ENCODE measurements at regions of chr12 and their contacts with region 1.

Region 1: DNA sequence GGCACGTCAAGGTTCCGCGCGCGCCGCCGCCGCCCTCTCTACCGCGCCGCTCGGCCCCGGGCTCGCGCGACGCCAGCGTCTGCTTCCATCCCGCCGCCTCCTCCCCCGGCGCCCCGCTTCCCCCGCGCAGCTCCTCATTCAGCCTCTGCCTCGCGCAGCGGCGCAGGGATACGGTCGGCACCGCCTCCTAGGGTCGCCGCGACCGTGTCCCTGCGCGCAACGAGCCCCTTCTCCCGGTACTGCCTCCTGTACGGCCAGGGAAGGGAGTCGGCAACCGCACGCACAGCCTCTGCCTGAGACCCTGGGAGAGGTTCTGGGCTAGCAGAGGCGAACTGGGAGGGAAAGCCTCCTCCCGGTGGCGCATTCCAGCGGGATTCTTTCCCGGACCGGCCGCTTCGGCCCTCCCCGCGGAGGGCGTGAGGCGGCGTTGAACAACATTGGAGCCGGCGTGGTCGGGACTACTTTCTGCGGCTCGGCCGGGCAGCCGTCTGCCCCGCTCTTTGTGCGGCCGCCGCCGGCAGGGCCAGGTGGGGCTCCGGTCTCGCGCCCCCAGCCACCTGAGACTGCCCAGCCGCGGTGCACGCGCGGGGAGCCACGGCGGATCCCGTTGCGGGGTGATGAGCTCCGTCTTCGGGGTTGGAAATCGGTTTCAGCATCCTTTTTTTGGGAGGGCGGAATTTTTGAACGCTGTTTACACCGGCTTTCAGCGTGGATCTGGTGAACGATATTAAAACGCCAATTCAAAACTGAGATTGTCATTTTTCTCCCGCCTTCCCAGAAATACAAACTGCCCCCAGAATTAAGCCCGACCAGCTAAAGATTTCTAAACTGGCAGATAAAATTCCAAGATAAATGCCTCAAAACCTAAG is at the start of gene LRP6:
- DNase-seq: peak; percentile 92
- H3K4me3 Mint-ChIP-seq: peak within 1 kb of the TSS; percentile 94
- H3K27ac Mint-ChIP-seq: peak within 1 kb of the TSS; percentile 99
- H3K4me1 Mint-ChIP-seq: peaks cover 18% of the 10 kb centered on the region
- H3K27me3 Mint-ChIP-seq: no peaks in the 10 kb centered on the region
- CTCF ChIP-seq: no peak
- total RNA-seq, gene LRP6: 24.9 and 27.6 TPM in 2 replicates

Region 2: GRCh38 chr12:11741434-11742092 is 525.5 kb before region 1 on chr12:
- CTCF ChIA-PET with region 1: no interaction called
- POLR2A ChIA-PET with region 1: no interaction called
- intact Hi-C with region 1: no loop called
- DNase-seq: peak; percentile 21
- H3K4me3 Mint-ChIP-seq: no peak overlapping the region
- H3K27ac Mint-ChIP-seq: peak overlapping the region; percentile 9
- H3K4me1 Mint-ChIP-seq: peaks cover 24% of the 10 kb centered on the region
- H3K27me3 Mint-ChIP-seq: no peaks in the 10 kb centered on the region
- CTCF ChIP-seq: no peak

Region 3: GRCh38 chr12:12171991-12172521 is 95.1 kb before region 1 on chr12:
- CTCF ChIA-PET with region 1: no interaction called
- POLR2A ChIA-PET with region 1: interaction called, 19 read pairs
- intact Hi-C with region 1: no loop called
- DNase-seq: peak; percentile 57
- H3K4me3 Mint-ChIP-seq: no peak overlapping the region
- H3K27ac Mint-ChIP-seq: no peak overlapping the region
- H3K4me1 Mint-ChIP-seq: peaks cover 10% of the 10 kb centered on the region
- H3K27me3 Mint-ChIP-seq: no peaks in the 10 kb centered on the region
- CTCF ChIP-seq: no peak

Region 4: GRCh38 chr12:12201274-12201758 is 65.8 kb before region 1 on chr12:
- CTCF ChIA-PET with region 1: no interaction called
- POLR2A ChIA-PET with region 1: no interaction called
- intact Hi-C with region 1: no loop called
- DNase-seq: no peak
- H3K4me3 Mint-ChIP-seq: no peak overlapping the region
- H3K27ac Mint-ChIP-seq: no peak overlapping the region
- H3K4me1 Mint-ChIP-seq: no peaks in the 10 kb centered on the region
- H3K27me3 Mint-ChIP-seq: no peaks in the 10 kb centered on the region
- CTCF ChIP-seq: no peak

Region 5: DNA sequence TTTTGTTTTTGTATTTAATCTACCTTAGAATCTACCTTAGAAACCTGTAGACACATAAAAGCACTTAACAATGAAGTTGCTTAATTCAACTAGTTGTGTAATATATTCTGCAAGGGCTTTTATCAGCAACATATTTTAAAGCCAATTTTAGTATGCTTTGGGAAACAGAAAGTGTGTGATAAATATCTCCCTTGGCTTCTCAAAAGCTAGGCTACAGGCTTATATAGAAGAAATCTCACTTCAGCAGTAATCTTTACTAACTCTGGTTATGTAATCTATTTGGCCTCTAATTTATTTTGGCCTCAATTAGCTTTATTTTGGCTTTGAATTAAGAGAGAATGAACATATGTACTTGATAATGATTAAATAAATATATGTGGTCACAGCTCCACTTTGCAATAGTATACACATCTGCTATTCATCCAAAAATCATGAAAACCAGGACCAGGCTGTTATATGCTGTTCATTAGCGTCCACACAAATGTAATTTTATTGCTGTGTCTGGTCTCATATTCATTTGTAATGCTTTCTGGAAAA is 37.5 kb before region 1 on chr12:
- CTCF ChIA-PET with region 1: interaction called, 4 read pairs
- POLR2A ChIA-PET with region 1: interaction called, 13 read pairs
- intact Hi-C with region 1: no loop called
- DNase-seq: peak; percentile 28
- H3K4me3 Mint-ChIP-seq: no peak overlapping the region
- H3K27ac Mint-ChIP-seq: no peak overlapping the region
- H3K4me1 Mint-ChIP-seq: peaks cover 9% of the 10 kb centered on the region
- H3K27me3 Mint-ChIP-seq: no peaks in the 10 kb centered on the region
- CTCF ChIP-seq: no peak

Region 6: GRCh38 chr12:12254553-12254952 is 12.6 kb before region 1 on chr12:
- CTCF ChIA-PET with region 1: interaction called, 5 read pairs
- POLR2A ChIA-PET with region 1: interaction called, 10 read pairs
- intact Hi-C with region 1: no loop called
- DNase-seq: no peak
- H3K4me3 Mint-ChIP-seq: no peak overlapping the region
- H3K27ac Mint-ChIP-seq: no peak overlapping the region
- H3K4me1 Mint-ChIP-seq: peaks cover 8% of the 10 kb centered on the region
- H3K27me3 Mint-ChIP-seq: no peaks in the 10 kb centered on the region
- CTCF ChIP-seq: no peak

Region 7: GRCh38 chr12:12356886-12357718 is 90.0 kb after region 1 on chr12 and contains the start of gene BORCS5:
- CTCF ChIA-PET with region 1: no interaction called
- POLR2A ChIA-PET with region 1: interaction called, 46 read pairs
- intact Hi-C with region 1: no loop called
- DNase-seq: peak; percentile 98
- H3K4me3 Mint-ChIP-seq: peak within 1 kb of the TSS; percentile 91
- H3K27ac Mint-ChIP-seq: peak within 1 kb of the TSS; percentile 94
- H3K4me1 Mint-ChIP-seq: no peaks in the 10 kb centered on the region
- H3K27me3 Mint-ChIP-seq: no peaks in the 10 kb centered on the region
- CTCF ChIP-seq: no peak
- total RNA-seq, gene BORCS5: 11.0 and 15.3 TPM in 2 replicates

Measured in MCF 10A (cell line).